Mammary epithelial cell (primary cell): ENCODE measurements at regions of chr11 and their contacts with region 1.

Region 1: GRCh38 chr11:20022363-20023081 is 137.8 kb downstream of the DBX1 start:
- DNase-seq: peak; percentile 67
- H3K4me3 ChIP-seq: peak overlapping the region; percentile 43 to 64 (median 58)
- H3K27ac ChIP-seq: peak overlapping the region; percentile 26
- H3K4me1 ChIP-seq: peaks cover 48% of the 10 kb centered on the region
- H3K27me3 ChIP-seq: no peaks in the 10 kb centered on the region
- CTCF ChIP-seq: no peak

Region 2: GRCh38 chr11:19951558-19952115 is 70.9 kb before region 1 on chr11:
- CTCF ChIA-PET with region 1: interaction called, 4 read pairs
- dilution Hi-C with region 1: no loop called
- in situ Hi-C with region 1: no loop called
- intact Hi-C with region 1: loop called (anchors 1 kb)
- DNase-seq: peak; percentile 62
- H3K4me3 ChIP-seq: no peak overlapping the region
- H3K27ac ChIP-seq: no peak overlapping the region
- H3K4me1 ChIP-seq: peaks cover 17% of the 10 kb centered on the region
- H3K27me3 ChIP-seq: no peaks in the 10 kb centered on the region
- CTCF ChIP-seq: peak; percentile 47 to 57

Region 3: GRCh38 chr11:20037396-20038153 is 15.1 kb after region 1 on chr11:
- CTCF ChIA-PET with region 1: no interaction called
- dilution Hi-C with region 1: no loop called
- in situ Hi-C with region 1: no loop called
- intact Hi-C with region 1: no loop called
- DNase-seq: no peak
- H3K4me3 ChIP-seq: no peak overlapping the region
- H3K27ac ChIP-seq: no peak overlapping the region
- H3K4me1 ChIP-seq: peaks cover 38% of the 10 kb centered on the region
- H3K27me3 ChIP-seq: no peaks in the 10 kb centered on the region
- CTCF ChIP-seq: no peak